Endothelial cell of umbilical vein (primary cell): ENCODE measurements at regions of chr1 and their contacts with region 1.

Region 1: DNA sequence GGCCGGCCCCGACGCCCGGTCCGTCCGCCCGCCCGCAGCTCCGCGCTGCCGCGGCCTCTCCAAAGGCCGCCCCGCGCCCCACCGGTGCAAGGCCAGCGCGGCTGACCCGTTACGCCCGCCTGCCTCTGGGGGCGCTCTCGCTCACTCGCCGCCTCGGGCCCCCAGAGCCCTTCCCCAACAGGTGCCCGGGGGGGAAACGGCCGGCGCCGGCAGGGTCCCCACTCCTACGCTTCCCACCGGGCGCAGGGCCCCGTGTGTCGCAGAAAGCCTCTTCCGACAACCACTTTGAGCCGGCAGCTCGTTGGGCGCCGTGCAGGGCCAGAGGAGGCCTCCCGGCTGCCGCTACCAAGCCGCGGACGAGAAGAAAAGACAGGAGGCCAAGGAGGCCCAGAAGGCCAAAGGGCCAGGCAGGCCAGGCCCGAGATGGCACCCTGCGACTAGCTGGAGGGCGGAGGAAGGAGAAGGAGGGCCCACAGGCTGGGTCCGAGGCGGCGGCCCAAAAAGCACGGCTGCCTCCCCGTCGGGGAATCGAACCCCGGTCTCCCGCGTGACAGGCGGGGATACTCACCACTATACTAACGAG is 64.9 kb upstream of the FCGR2A start:
- DNase-seq: peak; percentile 51
- H3K4me3 ChIP-seq: peak overlapping the region; percentile 5 to 51 (median 6)
- H3K27ac ChIP-seq: no peak overlapping the region
- H3K4me1 ChIP-seq: peaks cover 5% of the 10 kb centered on the region
- H3K27me3 ChIP-seq: peaks cover 12% of the 10 kb centered on the region in 2 experiments
- CTCF ChIP-seq: peak; percentile 58 to 77
- POLR2A ChIP-seq: no peak

Region 2: GRCh38 chr1:161374373-161374772 is 66.0 kb before region 1 on chr1:
- CTCF ChIA-PET with region 1: no interaction called
- POLR2A ChIA-PET with region 1: no interaction called
- dilution Hi-C with region 1: no loop called
- intact Hi-C with region 1: no loop called
- DNase-seq: peak; percentile 49
- H3K4me3 ChIP-seq: no peak overlapping the region
- H3K27ac ChIP-seq: no peak overlapping the region
- H3K4me1 ChIP-seq: no peaks in the 10 kb centered on the region
- H3K27me3 ChIP-seq: no peaks in the 10 kb centered on the region
- CTCF ChIP-seq: peak; percentile 14 to 48
- POLR2A ChIP-seq: no peak

Region 3: DNA sequence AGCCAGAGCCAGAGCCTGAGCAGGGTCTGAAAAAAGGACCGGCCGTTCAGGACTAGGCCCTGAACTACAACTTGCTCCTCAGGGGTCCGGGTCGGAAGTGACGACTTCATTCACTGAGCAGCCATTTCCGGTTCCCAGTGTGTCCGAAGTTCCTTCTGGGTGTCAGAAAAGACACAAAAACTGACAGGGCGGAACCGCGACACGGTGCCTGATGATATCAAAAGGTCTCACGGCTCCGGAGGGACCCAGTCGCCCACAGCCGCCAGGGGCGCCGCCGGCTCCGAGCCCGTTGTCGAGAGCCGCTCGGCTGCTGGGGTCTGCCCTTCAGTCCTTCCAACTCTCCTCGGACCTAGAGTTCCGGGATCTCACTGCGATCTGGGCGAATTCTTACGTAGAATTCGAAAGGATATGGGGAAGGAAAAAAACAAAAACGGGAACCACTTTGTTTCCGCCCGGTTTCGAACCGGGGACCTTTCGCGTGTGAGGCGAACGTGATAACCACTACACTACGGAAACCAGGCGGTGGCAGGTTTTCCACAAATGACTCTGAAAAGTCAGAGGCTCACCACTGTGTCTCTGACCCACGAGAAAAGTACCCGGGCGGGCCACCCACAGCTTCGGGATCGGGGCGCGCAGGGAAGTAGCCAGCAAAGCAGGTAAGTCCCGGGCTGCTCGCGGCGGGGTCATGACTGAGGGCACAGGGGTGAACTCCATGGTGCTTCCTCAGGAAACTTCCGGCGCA is 41.0 kb before region 1 on chr1:
- CTCF ChIA-PET with region 1: interaction called, 9 read pairs
- POLR2A ChIA-PET with region 1: no interaction called
- dilution Hi-C with region 1: no loop called
- intact Hi-C with region 1: loop called (anchors 10 kb)
- DNase-seq: peak; percentile 92
- H3K4me3 ChIP-seq: peak overlapping the region; percentile 79 to 95 (median 87)
- H3K27ac ChIP-seq: peak overlapping the region; percentile 100
- H3K4me1 ChIP-seq: peaks cover 10% of the 10 kb centered on the region
- H3K27me3 ChIP-seq: peaks cover 0 to 2% of the 10 kb centered on the region in 2 experiments
- CTCF ChIP-seq: peak; percentile 46 to 61
- POLR2A ChIP-seq: peak; percentile 86

Region 4: DNA sequence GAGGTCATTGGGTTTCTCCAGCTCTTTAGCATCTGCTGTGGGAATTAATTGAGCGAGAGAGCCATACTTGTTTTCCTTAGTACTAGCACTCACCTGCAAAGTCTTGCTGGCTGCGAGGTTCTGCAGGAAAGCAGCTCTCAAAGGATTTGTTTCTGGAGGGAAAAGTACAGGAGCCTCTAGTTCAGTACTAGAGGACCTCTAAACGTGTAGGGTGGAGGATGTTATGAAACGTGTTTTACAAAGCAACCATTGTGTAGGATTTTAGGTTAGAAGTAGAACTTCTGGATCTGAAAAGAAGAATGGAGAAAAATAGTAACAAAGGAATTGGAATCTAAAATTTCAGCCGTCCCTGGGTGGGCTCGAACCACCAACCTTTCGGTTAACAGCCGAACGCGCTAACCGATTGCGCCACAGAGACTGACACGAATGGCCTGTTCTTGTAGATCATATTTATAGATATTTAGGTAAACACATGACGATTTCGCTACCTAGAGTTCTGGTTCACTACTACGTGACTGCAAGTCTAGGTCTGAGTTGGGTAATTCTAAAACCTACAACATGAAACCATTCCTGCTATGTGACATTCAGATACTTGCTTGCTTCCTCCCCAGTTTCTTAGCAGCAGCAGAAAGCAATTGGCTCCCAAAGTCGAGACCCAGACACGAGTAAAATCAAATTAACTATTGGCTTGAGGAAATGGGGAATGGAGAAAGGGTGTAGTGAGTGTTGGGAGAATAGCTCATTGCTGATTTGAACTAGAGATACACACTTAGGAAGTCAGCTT is 12.5 kb before region 1 on chr1:
- CTCF ChIA-PET with region 1: interaction called, 14 read pairs
- POLR2A ChIA-PET with region 1: no interaction called
- dilution Hi-C with region 1: no loop called
- intact Hi-C with region 1: no loop called
- DNase-seq: peak; percentile 25
- H3K4me3 ChIP-seq: no peak overlapping the region
- H3K27ac ChIP-seq: no peak overlapping the region
- H3K4me1 ChIP-seq: peaks cover 3% of the 10 kb centered on the region
- H3K27me3 ChIP-seq: peaks cover 13 to 17% of the 10 kb centered on the region in 2 experiments
- CTCF ChIP-seq: no peak
- POLR2A ChIP-seq: no peak